Activated T-helper 2 cell treated with anti-CD3 and anti-CD28 coated beads, Interferon-gamma antibody, Interleukin-2, Interleukin-4, amounts not matched to agents 10 μg/mL and 5 μg/mL and 100 μg/mL, durations not matched to agents 14 hours and 24 hours and 36 hours (primary cell): ENCODE measurements at regions of chr20 and their contacts with region 1.

Region 1: DNA sequence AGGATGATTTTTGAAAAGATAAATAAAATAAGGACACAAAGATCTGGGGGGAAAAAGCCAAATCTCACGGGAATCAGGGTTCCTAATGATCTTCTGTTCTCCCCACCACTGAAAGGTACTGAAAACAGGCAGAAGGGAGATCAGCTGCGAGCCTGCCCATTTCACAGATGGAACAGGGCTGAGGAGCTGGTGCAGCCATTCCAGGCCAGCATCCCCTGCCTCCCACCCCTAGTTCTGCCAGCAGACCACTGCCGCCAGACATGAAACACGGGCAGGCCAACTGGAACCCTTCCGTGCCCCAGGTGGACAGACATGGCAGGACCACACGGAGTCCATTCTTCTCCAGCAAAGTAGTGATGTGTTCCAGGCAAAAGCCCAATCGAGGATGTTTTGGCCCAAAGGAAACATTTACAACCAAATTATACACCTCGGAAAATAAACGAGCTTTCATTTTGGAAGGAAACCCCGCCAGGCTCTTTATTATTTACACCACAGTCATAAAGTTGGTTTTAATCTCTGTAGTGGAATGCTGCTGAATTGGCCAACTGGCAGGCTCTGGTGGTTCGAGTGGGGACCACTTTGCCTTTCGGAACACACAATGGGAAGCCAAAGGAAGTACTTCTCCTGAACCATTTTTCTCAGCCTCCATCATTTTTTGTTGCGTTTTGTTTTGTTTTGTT is 28.2 kb downstream of the ISM1 start:
- DNase-seq: no peak
- H3K4me3 Mint-ChIP-seq: no peak overlapping the region
- H3K27ac Mint-ChIP-seq: no peak overlapping the region
- H3K4me1 Mint-ChIP-seq: peaks cover 46% of the 10 kb centered on the region
- H3K27me3 Mint-ChIP-seq: no peaks in the 10 kb centered on the region

Region 2: DNA sequence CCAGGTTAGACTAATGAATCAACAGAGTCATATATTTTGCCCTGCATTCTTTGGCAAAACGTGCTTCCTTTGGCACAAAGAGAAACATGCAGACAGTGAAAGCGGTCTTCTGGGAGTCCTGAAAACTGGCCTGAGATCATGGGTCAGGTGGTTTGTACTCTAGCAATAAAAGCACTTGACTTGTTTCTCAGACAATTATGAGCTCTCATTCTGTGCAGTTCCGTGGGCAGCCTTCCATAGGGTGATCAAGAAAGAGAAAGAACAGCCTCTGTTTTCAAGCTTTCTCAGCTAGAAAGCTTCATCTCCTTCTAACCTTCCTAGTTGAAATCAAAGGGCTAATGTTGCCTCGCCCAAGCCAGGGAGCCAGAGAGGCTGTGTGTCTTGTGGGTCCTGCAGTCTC is 90.9 kb before region 1 on chr20:
- intact Hi-C with region 1: no loop called
- DNase-seq: no peak
- H3K4me3 Mint-ChIP-seq: no peak overlapping the region
- H3K27ac Mint-ChIP-seq: no peak overlapping the region
- H3K4me1 Mint-ChIP-seq: no peaks in the 10 kb centered on the region
- H3K27me3 Mint-ChIP-seq: peaks cover 17% of the 10 kb centered on the region

Region 3: GRCh38 chr20:13325033-13325432 is 75.8 kb after region 1 on chr20:
- intact Hi-C with region 1: loop called (anchors 5 kb)
- DNase-seq: no peak
- H3K4me3 Mint-ChIP-seq: no peak overlapping the region
- H3K27ac Mint-ChIP-seq: peak overlapping the region; percentile 18
- H3K4me1 Mint-ChIP-seq: peaks cover 26% of the 10 kb centered on the region
- H3K27me3 Mint-ChIP-seq: peaks cover 1% of the 10 kb centered on the region

Region 4: GRCh38 chr20:13638496-13639222 is 389.4 kb after region 1 on chr20 and contains the start of gene TASP1:
- intact Hi-C with region 1: loop called (anchors 5 kb)
- DNase-seq: peak; percentile 90
- H3K4me3 Mint-ChIP-seq: peak within 1 kb of the TSS; percentile 95
- H3K27ac Mint-ChIP-seq: peak within 1 kb of the TSS; percentile 72
- H3K4me1 Mint-ChIP-seq: peaks cover 21% of the 10 kb centered on the region
- H3K27me3 Mint-ChIP-seq: peaks cover 3% of the 10 kb centered on the region
- total RNA-seq, gene TASP1: 9.6 and 11.3 TPM in 2 replicates